Transverse colon (tissue), 4 donors: ENCODE measurements at regions of chr19 and their contacts with region 1.

Region 1: GRCh38 chr19:40425450-40426287 is at the start of gene SERTAD1:
- DNase-seq: peak; percentile 100
- H3K4me3 ChIP-seq: peak within 1 kb of the TSS; percentile 66 to 99 (median 85)
- H3K27ac ChIP-seq: peak within 1 kb of the TSS; percentile 97 to 100 (median 99)
- H3K4me1 ChIP-seq: peaks cover 23 to 46% (median 37%) of the 10 kb centered on the region in 4 donors
- H3K27me3 ChIP-seq: no peaks in the 10 kb centered on the region
- CTCF ChIP-seq: peak; percentile 79 to 96 (median 84)
- EP300 ChIP-seq: peak; percentile 3
- POLR2A ChIP-seq: peak; percentile 99
- total RNA-seq, gene SERTAD1: 2.6 to 30.3 (median 18.4) TPM

Region 2: GRCh38 chr19:40285353-40286234 is 140.1 kb before region 1 on chr19:
- in situ Hi-C with region 1: loop called in 2 of 4 experiments (anchors 10 to 25 kb)
- intact Hi-C with region 1: no loop called
- DNase-seq: peak; percentile 98
- H3K4me3 ChIP-seq: peak overlapping the region; percentile 86 to 100 (median 93)
- H3K27ac ChIP-seq: peak overlapping the region; percentile 90 to 99 (median 96)
- H3K4me1 ChIP-seq: peaks cover 23 to 38% (median 33%) of the 10 kb centered on the region in 4 donors
- H3K27me3 ChIP-seq: no peaks in the 10 kb centered on the region
- CTCF ChIP-seq: no peak
- EP300 ChIP-seq: no peak
- POLR2A ChIP-seq: peak; percentile 28

Region 3: GRCh38 chr19:40443131-40443810 is 17.6 kb after region 1 on chr19:
- in situ Hi-C with region 1: no loop called
- intact Hi-C with region 1: loop called (anchors 1 kb)
- DNase-seq: peak; percentile 100
- H3K4me3 ChIP-seq: peak overlapping the region; percentile 64 to 98 (median 70)
- H3K27ac ChIP-seq: peak overlapping the region; percentile 95 to 99 (median 98)
- H3K4me1 ChIP-seq: peaks cover 9 to 41% (median 24%) of the 10 kb centered on the region in 4 donors
- H3K27me3 ChIP-seq: no peaks in the 10 kb centered on the region
- CTCF ChIP-seq: no peak
- EP300 ChIP-seq: peak; percentile 70
- POLR2A ChIP-seq: peak; percentile 70

Region 4: GRCh38 chr19:40466985-40467734 is 41.5 kb after region 1 on chr19 and contains the start of gene SPTBN4:
- in situ Hi-C with region 1: no loop called
- intact Hi-C with region 1: loop called (anchors 1 kb)
- DNase-seq: no peak
- H3K4me3 ChIP-seq: peak within 1 kb of the TSS; percentile 17 to 80 (median 32)
- H3K27ac ChIP-seq: peak within 1 kb of the TSS; percentile 49 to 95 (median 70)
- H3K4me1 ChIP-seq: peaks cover 15 to 26% (median 25%) of the 10 kb centered on the region in 4 donors
- H3K27me3 ChIP-seq: peaks cover 10% of the 10 kb centered on the region
- CTCF ChIP-seq: no peak
- EP300 ChIP-seq: no peak
- POLR2A ChIP-seq: no peak
- total RNA-seq, gene SPTBN4: under 0.01 to 1.5 (median 0.99) TPM